Posterior vena cava (tissue), 2 donors: ENCODE measurements at regions of chr5 and their contacts with region 1.

Region 1: DNA sequence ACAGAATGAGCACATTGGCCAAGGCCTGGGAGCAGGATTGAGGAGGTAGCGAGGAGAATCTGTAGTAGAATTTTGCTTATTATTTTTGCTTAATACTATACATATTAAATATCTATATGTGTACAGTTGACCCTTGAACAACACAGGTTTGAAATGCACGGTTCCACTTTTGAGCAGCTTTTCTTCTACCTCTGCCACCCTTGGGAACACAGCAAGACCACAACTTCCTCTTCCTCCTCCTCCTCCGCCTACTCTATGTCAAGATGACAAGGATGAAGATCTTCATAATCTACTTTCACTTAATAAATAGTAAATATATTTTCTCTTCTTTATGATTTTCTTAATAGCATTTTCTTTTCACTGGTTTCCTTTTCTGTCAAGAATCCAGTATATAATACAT is 541.4 kb downstream of the KCTD16 start:
- DNase-seq: no peak

Region 2: GRCh38 chr5:144487207-144487606 is 224.9 kb before region 1 on chr5:
- intact Hi-C with region 1: loop called in 1 of 2 experiments (anchors 5 kb)
- DNase-seq: no peak

Region 3: GRCh38 chr5:144731786-144732185 is 19.7 kb after region 1 on chr5:
- intact Hi-C with region 1: no loop called
- DNase-seq: no peak